ENCODE measurements at regions of chr11 and their contacts with region 1.

Region 1: GRCh38 chr11:62880803-62881578 is at the start of gene SLC3A2:
- DNase-seq: peak; percentile 86
- ATAC-seq: peak; percentile 80
- H3K4me3 Mint-ChIP-seq: peak within 1 kb of the TSS; percentile 100
- H3K27ac Mint-ChIP-seq: peak within 1 kb of the TSS; percentile 100
- H3K4me1 Mint-ChIP-seq: peaks cover 46% of the 10 kb centered on the region
- H3K27me3 Mint-ChIP-seq: no peaks in the 10 kb centered on the region
- CTCF ChIP-seq: no peak
- total RNA-seq, gene SLC3A2: 270 and 274 TPM in 2 replicates

Region 2: DNA sequence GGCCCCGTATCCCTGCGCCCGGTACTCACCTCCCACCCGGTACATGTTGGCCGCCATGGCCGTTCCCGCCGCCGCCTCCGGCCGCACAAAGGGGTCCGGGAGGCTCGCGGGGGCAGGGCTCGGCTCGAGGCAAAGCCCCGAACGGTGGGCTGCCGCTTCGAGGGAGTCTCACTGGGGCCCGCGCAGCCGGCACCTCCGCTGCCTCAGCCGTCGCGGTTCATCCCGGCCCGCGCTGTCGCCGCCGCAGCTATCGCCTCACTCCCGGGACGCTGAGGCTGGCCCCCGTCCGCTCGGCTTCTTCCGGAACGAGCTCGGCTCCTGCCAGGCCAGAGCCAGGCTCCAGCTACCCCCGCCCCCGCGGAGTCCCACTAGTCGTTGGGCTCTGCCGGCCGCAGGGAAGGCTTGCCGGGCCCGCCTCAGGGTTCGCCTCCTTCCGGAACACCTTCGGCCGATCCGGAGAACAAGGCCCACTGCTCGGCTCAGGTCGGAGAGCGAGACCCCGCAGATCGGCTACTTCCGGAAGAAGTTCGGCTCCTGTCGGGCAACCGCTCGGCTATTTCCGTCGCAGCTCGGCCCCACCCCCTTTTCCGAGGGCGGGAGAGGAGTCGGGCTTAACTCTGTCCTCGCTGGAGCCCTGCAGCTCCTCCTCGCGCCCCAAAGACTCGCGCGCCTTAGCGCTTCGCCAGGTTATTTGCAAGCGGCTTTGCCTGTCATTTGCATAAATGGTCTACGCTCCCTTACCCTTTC is 279.4 kb before region 1 on chr11 and contains the start of gene MTA2:
- CTCF ChIA-PET with region 1: no interaction called
- POLR2A ChIA-PET with region 1: interaction called, 12 read pairs
- intact Hi-C with region 1: loop called (anchors 1 kb)
- DNase-seq: peak; percentile 100
- ATAC-seq: peak; percentile 81
- H3K4me3 Mint-ChIP-seq: peak within 1 kb of the TSS; percentile 92
- H3K27ac Mint-ChIP-seq: peak within 1 kb of the TSS; percentile 97
- H3K4me1 Mint-ChIP-seq: peaks cover 45% of the 10 kb centered on the region
- H3K27me3 Mint-ChIP-seq: no peaks in the 10 kb centered on the region
- CTCF ChIP-seq: no peak
- total RNA-seq, gene MTA2: 170 and 175 TPM in 2 replicates

Region 3: DNA sequence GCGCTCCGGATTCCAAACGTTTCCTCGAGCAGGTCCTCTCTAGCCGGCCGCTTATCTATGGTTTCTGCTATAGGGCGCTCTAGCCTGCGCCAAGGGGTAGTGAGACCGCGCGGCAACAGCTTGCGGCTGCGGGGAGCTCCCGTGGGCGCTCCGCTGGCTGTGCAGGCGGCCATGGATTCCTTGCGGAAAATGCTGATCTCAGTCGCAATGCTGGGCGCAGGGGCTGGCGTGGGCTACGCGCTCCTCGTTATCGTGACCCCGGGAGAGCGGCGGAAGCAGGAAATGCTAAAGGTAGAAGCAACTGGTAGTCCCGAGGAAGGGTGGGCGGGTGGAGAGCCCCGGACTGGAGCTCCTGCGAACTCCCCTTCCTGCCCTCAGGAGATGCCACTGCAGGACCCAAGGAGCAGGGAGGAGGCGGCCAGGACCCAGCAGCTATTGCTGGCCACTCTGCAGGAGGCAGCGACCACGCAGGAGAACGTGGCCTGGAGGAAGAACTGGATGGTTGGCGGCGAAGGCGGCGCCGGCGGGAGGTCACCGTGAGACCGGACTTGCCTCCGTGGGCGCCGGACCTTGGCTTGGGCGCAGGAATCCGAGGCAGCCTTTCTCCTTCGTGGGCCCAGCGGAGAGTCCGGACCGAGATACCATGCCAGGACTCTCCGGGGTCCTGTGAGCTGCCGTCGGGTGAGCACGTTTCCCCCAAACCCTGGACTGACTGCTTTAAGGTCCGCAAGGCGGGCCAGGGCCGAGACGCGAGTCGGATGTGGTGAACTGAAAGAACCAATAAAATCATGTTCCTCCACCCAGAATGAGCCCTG is 209.2 kb before region 1 on chr11 and contains the starts of genes LBHD1 and UQCC3:
- CTCF ChIA-PET with region 1: interaction called, 3 read pairs
- POLR2A ChIA-PET with region 1: interaction called, 15 read pairs
- intact Hi-C with region 1: no loop called
- DNase-seq: peak; percentile 61
- ATAC-seq: peak; percentile 82
- H3K4me3 Mint-ChIP-seq: peak within 1 kb of the TSS; percentile 100
- H3K27ac Mint-ChIP-seq: peak within 1 kb of the TSS; percentile 98
- H3K4me1 Mint-ChIP-seq: peaks cover 62% of the 10 kb centered on the region
- H3K27me3 Mint-ChIP-seq: no peaks in the 10 kb centered on the region
- CTCF ChIP-seq: no peak
- total RNA-seq, gene LBHD1: 19.1 and 24.9 TPM in 2 replicates
- total RNA-seq, gene UQCC3: 8.3 and 9.4 TPM in 2 replicates

Region 4: DNA sequence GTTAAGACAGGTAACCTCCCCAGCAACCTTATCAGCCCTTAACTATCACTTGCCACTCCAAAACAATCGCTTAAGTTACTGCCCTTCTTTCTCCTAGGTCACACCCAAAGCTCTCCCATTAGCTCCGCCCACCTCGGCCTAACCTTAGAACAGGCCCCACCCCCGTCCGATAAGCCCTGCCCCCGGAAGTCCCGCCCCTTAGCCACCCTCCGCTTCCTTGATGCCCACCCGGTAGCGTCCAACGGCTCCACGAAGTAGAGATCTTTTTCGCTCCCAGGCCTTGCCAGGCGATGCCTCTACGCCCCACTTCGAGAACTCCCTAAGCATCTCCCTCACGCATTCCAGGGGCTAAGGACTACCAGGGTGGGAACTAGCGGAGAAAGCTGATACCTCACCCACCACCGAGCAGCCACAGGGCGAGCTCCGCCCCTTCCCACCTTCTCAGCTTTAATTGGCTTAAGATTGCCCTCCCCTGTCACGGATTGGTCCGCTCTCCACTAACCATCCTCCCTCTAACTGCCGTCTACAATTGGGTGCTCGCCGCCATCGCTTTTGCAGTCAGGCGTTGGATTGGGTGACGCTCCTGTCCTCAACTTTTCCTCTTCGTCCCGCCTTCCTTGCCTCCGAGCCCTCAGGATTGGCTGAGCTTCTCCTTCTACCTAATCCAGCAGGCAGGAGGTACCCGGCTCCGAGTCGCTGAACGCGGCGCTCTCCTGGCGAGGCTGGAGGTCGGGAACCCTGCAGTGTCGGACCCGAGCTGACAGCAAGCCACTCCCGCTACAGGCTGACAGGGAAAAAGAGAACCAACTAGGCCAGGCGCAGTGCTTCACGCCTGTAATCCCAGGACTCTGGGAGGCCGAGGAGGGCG is 127.0 kb before region 1 on chr11 and contains the start of gene ZBTB3:
- CTCF ChIA-PET with region 1: interaction called, 6 read pairs
- POLR2A ChIA-PET with region 1: interaction called, 50 read pairs
- intact Hi-C with region 1: no loop called
- DNase-seq: peak; percentile 91
- ATAC-seq: peak; percentile 93
- H3K4me3 Mint-ChIP-seq: peak within 1 kb of the TSS; percentile 97
- H3K27ac Mint-ChIP-seq: peak within 1 kb of the TSS; percentile 99
- H3K4me1 Mint-ChIP-seq: peaks cover 22% of the 10 kb centered on the region
- H3K27me3 Mint-ChIP-seq: no peaks in the 10 kb centered on the region
- CTCF ChIP-seq: no peak
- total RNA-seq, gene ZBTB3: 17.6 and 19.9 TPM in 2 replicates

Region 5: DNA sequence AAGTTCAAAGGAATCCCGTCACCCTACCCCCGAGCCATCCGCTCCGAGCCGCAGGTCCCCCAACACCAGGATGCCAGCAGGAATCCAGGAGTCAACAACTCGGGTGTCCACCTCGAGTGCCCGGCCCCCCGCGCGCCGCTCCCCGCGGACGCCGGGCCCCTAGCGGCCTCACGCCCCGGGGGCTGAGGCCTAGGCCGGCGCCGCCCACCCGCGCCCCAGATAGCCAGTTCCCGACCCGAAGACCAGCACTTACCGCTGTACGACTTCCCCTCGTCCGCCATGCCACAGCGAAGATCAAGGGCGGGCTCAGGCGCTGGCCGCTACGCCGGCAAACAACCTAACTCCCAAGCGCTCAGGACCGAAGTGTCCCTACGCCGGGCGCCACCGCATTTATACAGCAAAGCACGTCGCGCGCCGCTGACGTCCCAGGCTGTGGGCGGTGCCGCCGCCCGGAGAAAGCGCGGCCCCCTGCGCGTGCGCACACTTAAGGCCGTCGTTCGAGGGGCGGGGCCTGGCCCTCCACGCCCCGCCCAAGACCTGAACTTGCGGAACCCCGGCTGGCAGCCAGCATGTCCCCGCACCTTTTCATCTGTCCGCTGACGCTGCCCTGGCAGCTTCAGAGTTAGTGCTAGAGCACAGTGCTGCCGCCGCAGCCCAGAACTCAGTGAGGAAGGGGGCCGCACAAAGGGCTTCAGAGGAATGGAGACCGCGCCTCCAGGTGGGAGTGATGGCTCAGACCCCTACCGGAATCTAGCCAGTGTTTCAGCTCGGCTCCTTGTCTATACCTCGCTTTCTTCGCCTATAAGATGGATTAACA is 75.7 kb before region 1 on chr11 and contains the start of gene NXF1:
- CTCF ChIA-PET with region 1: no interaction called
- POLR2A ChIA-PET with region 1: interaction called, 24 read pairs
- intact Hi-C with region 1: loop called (anchors 1 kb)
- DNase-seq: peak; percentile 99
- ATAC-seq: peak; percentile 86
- H3K4me3 Mint-ChIP-seq: peak within 1 kb of the TSS; percentile 96
- H3K27ac Mint-ChIP-seq: peak within 1 kb of the TSS; percentile 93
- H3K4me1 Mint-ChIP-seq: peaks cover 36% of the 10 kb centered on the region
- H3K27me3 Mint-ChIP-seq: no peaks in the 10 kb centered on the region
- CTCF ChIP-seq: no peak
- total RNA-seq, gene NXF1: 89.1 and 91.6 TPM in 2 replicates

Region 6: GRCh38 chr11:62855571-62856332 is 25.2 kb before region 1 on chr11:
- CTCF ChIA-PET with region 1: interaction called, 16 read pairs
- POLR2A ChIA-PET with region 1: interaction called, 155 read pairs
- intact Hi-C with region 1: loop called (anchors 1 kb)
- DNase-seq: peak; percentile 99
- ATAC-seq: peak; percentile 89
- H3K4me3 Mint-ChIP-seq: peak overlapping the region; percentile 99
- H3K27ac Mint-ChIP-seq: peak overlapping the region; percentile 96
- H3K4me1 Mint-ChIP-seq: peaks cover 61% of the 10 kb centered on the region
- H3K27me3 Mint-ChIP-seq: no peaks in the 10 kb centered on the region
- CTCF ChIP-seq: no peak

Region 7: DNA sequence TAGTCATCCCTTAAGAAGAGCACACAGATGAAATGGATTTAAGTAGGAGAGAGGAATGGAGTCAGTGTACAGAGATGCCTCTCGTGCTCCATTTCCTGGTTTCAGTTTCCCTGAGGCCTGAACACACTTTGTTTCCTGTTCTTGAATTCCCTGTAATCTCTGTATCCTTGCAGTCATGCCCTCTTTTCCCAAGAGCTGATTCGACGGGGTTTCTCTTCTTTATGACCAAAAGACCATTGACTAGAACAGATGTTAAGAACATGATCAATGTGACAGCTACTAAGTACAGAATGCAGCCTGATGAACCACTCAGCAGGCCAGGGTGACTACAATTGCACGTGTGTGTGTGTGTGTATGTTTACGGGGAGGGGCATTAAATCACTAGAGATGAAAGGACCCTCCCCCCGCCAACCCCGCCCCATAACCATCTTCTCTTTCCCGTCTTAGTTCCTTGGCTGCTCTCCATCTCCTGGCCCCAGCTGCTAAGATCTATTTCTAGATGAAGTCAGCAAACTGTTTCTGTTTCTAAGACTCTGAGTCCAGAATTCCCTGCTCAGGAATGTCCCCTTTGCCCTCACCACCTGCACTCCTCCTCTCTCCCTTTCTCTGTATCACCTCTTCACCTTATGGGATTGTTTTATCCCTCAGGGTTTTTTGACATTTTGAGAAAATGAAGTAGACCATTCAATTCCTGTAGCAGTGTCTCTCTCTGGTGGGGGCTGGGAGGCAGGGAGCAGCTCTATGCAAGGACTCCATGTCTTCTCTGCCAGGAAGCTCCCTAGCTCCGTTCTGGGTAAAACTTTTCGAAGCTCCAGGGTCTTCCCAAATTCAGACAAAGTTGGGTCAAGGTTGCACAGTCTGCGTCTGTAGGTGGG is 77.8 kb after region 1 on chr11:
- CTCF ChIA-PET with region 1: no interaction called
- POLR2A ChIA-PET with region 1: no interaction called
- intact Hi-C with region 1: no loop called
- DNase-seq: no peak
- ATAC-seq: no peak
- H3K4me3 Mint-ChIP-seq: no peak overlapping the region
- H3K27ac Mint-ChIP-seq: no peak overlapping the region
- H3K4me1 Mint-ChIP-seq: no peaks in the 10 kb centered on the region
- H3K27me3 Mint-ChIP-seq: peaks cover 38% of the 10 kb centered on the region
- CTCF ChIP-seq: no peak

Measured in activated B cell treated with CpG ODN at 0.5 μM for 24 hours (primary cell).